Activated T-helper 2 cell treated with anti-CD3 and anti-CD28 coated beads, Interferon-gamma antibody, Interleukin-2, Interleukin-4, amounts not matched to agents 10 μg/mL and 5 μg/mL and 100 μg/mL, durations not matched to agents 14 hours and 24 hours and 36 hours (primary cell): ENCODE measurements at regions of chr1 and their contacts with region 1.

Region 1: GRCh38 chr1:2412519-2413233 is at the start of gene PEX10:
- DNase-seq: peak; percentile 99
- H3K4me3 Mint-ChIP-seq: peak within 1 kb of the TSS; percentile 90
- H3K27ac Mint-ChIP-seq: peak within 1 kb of the TSS; percentile 88
- H3K4me1 Mint-ChIP-seq: peaks cover 27% of the 10 kb centered on the region
- H3K27me3 Mint-ChIP-seq: no peaks in the 10 kb centered on the region
- total RNA-seq, gene PEX10: 17.6 and 18.2 TPM in 2 replicates

Region 2: GRCh38 chr1:2391041-2391930 is 21.4 kb before region 1 on chr1 and contains the starts of genes MORN1 and RER1:
- intact Hi-C with region 1: loop called (anchors 1 kb)
- DNase-seq: peak; percentile 99
- H3K4me3 Mint-ChIP-seq: peak within 1 kb of the TSS; percentile 84
- H3K27ac Mint-ChIP-seq: peak within 1 kb of the TSS; percentile 76
- H3K4me1 Mint-ChIP-seq: peaks cover 25% of the 10 kb centered on the region
- H3K27me3 Mint-ChIP-seq: no peaks in the 10 kb centered on the region
- total RNA-seq, gene MORN1: 7.5 and 8.0 TPM in 2 replicates
- total RNA-seq, gene RER1: 142 and 144 TPM in 2 replicates

Region 3: DNA sequence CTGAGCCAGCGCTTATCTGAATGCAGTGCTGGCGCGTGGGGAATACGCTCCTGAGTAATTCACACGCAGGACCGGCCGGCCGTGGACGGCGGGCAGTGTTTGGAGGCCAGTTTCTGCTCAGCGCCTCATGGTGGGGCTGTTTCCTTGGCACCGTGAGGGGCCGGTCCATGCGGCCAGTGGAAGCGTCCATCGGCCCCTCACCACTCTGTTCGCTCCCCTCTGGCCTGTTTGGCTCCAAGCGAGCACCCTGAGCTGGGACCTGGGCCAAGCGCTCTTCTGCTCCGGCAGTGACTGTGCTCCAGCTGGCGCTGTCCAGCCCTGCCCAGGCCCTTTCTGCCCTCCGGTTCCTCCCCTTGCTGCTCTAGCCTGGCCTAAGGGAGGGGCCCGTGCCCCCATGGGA is 47.1 kb after region 1 on chr1:
- intact Hi-C with region 1: no loop called
- DNase-seq: no peak
- H3K4me3 Mint-ChIP-seq: no peak overlapping the region
- H3K27ac Mint-ChIP-seq: no peak overlapping the region
- H3K4me1 Mint-ChIP-seq: no peaks in the 10 kb centered on the region
- H3K27me3 Mint-ChIP-seq: no peaks in the 10 kb centered on the region

Region 4: GRCh38 chr1:2525920-2526823 is 113.5 kb after region 1 on chr1 and contains the start of gene PANK4:
- intact Hi-C with region 1: loop called (anchors 1 kb)
- DNase-seq: peak; percentile 85
- H3K4me3 Mint-ChIP-seq: peak within 1 kb of the TSS; percentile 91
- H3K27ac Mint-ChIP-seq: peak within 1 kb of the TSS; percentile 93
- H3K4me1 Mint-ChIP-seq: peaks cover 31% of the 10 kb centered on the region
- H3K27me3 Mint-ChIP-seq: peaks cover 18% of the 10 kb centered on the region
- total RNA-seq, gene PANK4: 49.1 and 52.2 TPM in 2 replicates

Region 5: GRCh38 chr1:2586154-2587070 is 173.7 kb after region 1 on chr1 and contains the start of gene PRXL2B:
- intact Hi-C with region 1: loop called (anchors 1 kb)
- DNase-seq: peak; percentile 98
- H3K4me3 Mint-ChIP-seq: peak within 1 kb of the TSS; percentile 84
- H3K27ac Mint-ChIP-seq: peak within 1 kb of the TSS; percentile 86
- H3K4me1 Mint-ChIP-seq: peaks cover 33% of the 10 kb centered on the region
- H3K27me3 Mint-ChIP-seq: no peaks in the 10 kb centered on the region
- total RNA-seq, gene PRXL2B: 26.5 and 28.4 TPM in 2 replicates

Region 6: GRCh38 chr1:2786329-2787162 is 373.9 kb after region 1 on chr1:
- intact Hi-C with region 1: loop called (anchors 2 kb)
- DNase-seq: peak; percentile 50
- H3K4me3 Mint-ChIP-seq: no peak overlapping the region
- H3K27ac Mint-ChIP-seq: no peak overlapping the region
- H3K4me1 Mint-ChIP-seq: no peaks in the 10 kb centered on the region
- H3K27me3 Mint-ChIP-seq: peaks cover 17% of the 10 kb centered on the region